CD4-positive, alpha-beta memory T cell (primary cell): ENCODE measurements at regions of chr7 and their contacts with region 1.

Region 1: DNA sequence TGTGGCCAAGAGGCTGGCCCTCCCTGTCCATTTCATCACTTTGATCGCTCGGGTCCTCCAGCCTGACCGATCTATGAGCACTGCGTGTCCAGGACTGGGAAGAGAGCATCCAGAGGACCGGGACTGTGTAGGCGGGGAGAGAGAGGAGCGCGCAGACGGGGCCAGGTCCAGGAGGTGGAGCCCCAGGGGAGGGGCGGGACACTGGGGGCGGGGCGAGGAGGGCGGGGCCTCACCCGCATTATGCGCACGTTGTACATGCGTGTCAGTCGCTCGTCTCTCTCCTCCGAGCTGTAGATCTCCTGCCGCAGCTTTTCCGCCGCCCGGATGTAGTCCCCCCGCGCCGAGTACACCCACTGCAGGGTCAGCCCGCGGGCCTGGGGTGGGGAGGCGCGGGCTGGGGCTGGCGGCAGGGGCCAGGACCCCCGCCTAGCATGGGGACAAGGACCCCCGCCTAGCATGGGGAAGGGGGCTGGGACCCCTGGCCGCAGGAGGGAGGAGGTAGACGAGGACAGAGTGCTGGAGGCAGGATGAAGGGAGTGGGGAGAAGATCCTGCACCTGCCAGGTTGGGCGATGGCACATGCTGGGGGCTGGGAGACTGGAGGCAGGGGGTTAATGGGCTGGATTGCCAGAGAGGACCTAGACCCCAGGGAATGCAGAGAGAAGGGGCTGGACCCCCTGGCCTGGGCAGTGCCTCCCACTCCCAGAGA is 14.3 kb downstream of the MOSPD3 start:
- DNase-seq: peak; percentile 79 to 91 (median 82)
- H3K4me3 ChIP-seq: peak overlapping the region; percentile 36 to 67
- H3K4me3 Mint-ChIP-seq: peak overlapping the region; percentile 61 to 83 (median 76)
- H3K27ac ChIP-seq: peak overlapping the region; percentile 63
- H3K27ac Mint-ChIP-seq: peak overlapping the region; percentile 45 to 94 (median 83)
- H3K4me1 ChIP-seq: peaks cover 24% of the 10 kb centered on the region
- H3K4me1 Mint-ChIP-seq: peaks cover 15 to 41% (median 28%) of the 10 kb centered on the region in 4 donors
- H3K27me3 ChIP-seq: no peaks in the 10 kb centered on the region
- H3K27me3 Mint-ChIP-seq: no peaks in the 10 kb centered on the region

Region 2: DNA sequence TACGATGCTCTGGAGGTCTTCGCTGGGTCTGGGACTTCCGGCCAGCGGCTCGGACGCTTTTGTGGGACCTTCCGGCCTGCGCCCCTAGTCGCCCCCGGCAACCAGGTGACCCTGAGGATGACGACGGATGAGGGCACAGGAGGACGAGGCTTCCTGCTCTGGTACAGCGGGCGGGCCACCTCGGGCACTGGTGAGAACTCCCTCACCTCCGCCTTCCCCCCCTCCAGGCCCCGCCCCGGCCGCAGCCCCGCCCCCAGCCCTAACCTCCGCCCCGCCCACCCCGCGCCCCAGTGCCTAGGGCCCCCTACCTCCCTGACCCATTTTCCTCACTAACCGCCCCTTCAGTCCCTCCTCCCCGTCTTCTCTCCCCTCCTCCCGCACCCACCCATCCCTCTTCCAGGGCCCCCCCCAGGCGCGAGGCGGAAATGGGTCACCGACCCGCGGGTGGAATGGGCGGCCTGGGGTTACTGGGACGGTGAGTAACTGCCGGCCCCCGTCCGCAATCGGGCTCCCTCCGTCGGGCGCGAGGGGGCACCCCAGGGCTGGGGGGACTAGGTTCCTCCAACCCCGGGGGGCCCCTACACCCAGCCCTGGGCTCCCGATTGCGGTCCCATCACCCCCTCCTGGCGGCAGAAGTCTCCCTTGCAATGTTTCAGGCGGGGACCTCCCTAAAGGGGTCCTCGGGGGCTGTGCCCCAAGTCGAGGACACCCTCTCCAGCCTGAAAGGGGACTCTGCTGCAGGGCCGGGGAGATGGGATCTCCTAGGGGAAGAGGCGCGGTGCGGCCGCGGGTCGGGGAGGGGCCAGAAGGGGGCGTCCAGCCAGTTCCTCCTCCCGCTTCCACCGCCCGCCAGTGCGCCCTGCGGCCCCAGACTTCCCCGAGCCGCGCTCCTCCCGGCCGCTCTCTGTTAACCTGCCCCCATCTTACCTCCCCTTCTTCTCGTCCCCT is 22.4 kb before region 1 on chr7:
- CTCF ChIA-PET with region 1: interaction called, 3 read pairs
- POLR2A ChIA-PET with region 1: interaction called, 4 read pairs
- intact Hi-C with region 1: loop called (anchors 1 kb)
- DNase-seq: peak; percentile 63 to 83 (median 68)
- H3K4me3 ChIP-seq: peak overlapping the region; percentile 34 to 58
- H3K4me3 Mint-ChIP-seq: peak overlapping the region; percentile 78 to 93 (median 87)
- H3K27ac ChIP-seq: peak overlapping the region; percentile 64
- H3K27ac Mint-ChIP-seq: peak overlapping the region; percentile 71 to 95 (median 91)
- H3K4me1 ChIP-seq: peaks cover 21% of the 10 kb centered on the region
- H3K4me1 Mint-ChIP-seq: peaks cover 9 to 35% (median 16%) of the 10 kb centered on the region in 4 donors
- H3K27me3 ChIP-seq: no peaks in the 10 kb centered on the region
- H3K27me3 Mint-ChIP-seq: no peaks in the 10 kb centered on the region